ENCODE measurements at regions of chr4 and their contacts with region 1.

Region 1: DNA sequence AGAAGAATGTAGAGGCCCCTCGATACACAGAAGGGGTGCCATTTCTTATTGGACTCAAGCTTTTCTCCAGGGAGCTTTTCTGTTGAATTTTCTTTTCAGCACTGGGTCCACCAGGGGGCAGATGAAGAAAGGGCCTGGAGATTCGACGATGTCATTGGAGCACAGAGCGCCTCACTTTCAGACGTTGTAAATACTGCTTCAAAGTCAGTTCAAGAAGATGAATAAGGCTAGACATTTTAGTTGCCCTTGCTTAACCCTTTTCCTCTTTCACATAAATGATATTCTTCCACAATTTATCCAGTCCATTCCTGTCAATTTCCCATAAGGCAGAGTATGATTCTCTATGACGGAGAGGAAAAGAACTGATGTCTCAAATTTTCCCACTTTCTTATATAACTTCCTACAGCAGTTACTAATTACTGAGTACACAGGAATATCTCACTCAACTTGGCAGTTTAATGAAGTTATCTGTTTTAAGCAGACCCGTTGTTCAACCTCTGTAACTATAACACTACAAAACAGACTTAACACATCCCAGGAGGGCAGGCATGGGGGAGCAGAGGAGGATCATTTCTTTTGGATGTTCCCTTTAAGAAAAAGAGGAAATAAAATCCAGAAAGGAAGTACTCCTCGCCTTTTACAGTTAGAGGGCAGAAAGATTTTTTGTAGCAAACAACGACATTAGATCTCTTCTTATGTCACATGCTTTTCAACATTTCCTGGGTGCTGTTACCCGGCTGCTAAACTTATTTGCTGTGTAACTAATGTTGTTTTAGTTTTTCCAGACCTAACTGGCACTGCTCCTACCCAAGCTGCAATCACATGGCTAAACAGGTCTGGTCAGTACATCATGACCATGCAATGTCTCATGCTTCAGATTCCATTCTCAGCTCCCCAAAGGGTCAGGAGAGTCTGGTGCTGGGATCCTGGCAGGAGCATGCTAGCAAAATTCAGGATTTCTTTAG is 12.2 kb upstream of the CENPU start:
- DNase-seq: peak in 6 of 10 donors; percentile 67 to 93 (median 73)

Region 2: GRCh38 chr4:184805462-184806228 is 59.5 kb after region 1 on chr4:
- intact Hi-C with region 1: loop called (anchors 5 kb)
- DNase-seq: peak; percentile 35 to 94 (median 60)

Region 3: DNA sequence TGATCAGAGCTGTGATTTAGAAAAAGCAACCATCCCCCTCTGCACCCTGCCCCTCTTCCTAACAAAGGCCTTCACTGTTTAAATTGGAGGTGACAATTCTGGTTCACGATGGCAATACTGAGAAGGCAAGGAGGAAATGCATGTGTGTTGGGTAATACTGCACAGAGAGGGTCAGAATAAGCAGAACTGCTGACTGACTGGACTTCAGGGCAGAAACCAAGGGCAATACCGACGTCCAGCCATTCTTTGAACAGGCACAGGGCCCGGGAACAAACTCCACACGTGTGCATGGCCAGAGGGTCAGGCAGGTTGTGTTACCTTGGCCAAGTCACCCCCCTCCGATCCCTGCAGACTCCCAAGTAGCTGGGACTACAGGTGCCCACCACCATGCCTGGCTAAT is 73.7 kb after region 1 on chr4:
- intact Hi-C with region 1: loop called (anchors 2 kb)
- DNase-seq: no peak

Region 4: DNA sequence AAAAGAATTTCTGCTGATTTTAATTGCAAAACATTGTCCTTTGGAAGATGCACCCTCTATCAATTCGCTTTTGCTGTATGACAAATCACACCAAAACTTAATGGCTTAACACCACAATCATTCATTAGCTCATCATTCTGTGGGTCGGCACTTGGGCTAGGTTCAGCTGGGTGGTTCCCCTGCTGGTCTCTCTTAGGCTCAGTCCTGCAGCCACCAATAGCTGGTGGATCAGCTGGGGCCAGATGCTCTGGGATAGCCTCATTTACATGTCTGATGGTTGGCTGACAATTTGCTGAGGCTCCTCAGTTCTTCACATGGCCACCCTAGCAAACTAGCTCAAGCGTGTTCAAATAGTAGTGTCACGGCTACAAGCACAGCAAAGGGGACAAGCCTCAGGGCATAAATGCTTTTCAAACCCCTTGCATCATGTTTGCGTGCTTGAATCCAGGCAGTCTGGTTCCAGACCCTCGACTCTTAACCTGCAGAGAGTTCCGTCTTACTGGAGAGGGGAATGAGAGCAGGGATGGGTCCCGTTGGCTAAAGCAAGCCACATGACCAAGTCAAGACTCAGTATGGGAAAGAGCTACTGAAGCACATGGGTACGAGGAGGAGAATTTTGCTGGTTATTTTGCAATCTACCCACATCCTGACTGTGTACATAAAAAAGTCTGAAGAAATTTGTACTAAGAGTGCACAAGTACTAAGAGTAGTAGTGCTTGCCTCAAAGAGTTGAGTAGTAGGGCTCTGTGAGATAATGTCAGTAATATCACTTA is 87.1 kb after region 1 on chr4:
- intact Hi-C with region 1: no loop called
- DNase-seq: no peak

Region 5: GRCh38 chr4:185005216-185005819 is 259.2 kb after region 1 on chr4:
- intact Hi-C with region 1: loop called (anchors 10 kb)
- DNase-seq: peak; percentile 59 to 96 (median 83)

Region 6: GRCh38 chr4:185096032-185096653 is 350.0 kb after region 1 on chr4:
- intact Hi-C with region 1: loop called (anchors 10 kb)
- DNase-seq: peak in 3 of 10 donors; percentile 14 to 23 (median 15)

Measured in posterior cingulate gyrus (tissue), 11 donors.